GM23248 (cell line): ENCODE measurements at regions of chr17 and their contacts with region 1.

Region 1: DNA sequence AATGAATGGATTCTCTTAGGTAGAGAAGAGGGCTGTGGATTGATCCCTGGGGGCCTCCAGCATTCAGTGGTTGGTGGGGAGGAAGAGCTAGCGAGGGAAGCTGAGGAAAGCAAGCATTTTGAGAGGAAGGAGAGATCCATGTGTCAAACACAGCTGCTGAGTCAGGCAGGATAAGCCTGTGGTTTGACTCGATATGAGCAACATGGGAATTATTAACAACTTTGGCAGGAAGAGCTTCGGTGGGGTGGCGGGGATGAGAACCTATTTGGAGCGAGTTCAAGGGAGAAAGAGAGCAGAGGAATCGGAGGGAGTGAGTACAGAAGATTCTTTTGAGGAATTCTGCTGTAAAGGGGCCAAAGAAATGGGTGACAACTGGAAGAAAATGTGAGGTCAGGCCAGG is 59.5 kb upstream of the CDC42EP4 start:
- DNase-seq: peak; percentile 94
- H3K4me3 ChIP-seq: 0 out of 2 replicates have a peak overlapping the region, but pooled peaks have one; percentile 11
- H3K27ac ChIP-seq: no peak overlapping the region
- H3K4me1 ChIP-seq: peaks cover 6% of the 10 kb centered on the region; the same call in 1 of the 2 replicates
- H3K27me3 ChIP-seq: peaks cover 16% of the 10 kb centered on the region

Region 2: GRCh38 chr17:73255671-73256181 is 115.6 kb before region 1 on chr17:
- in situ Hi-C with region 1: loop called (anchors 5 kb)
- DNase-seq: peak; percentile 62
- H3K4me3 ChIP-seq: no peak overlapping the region
- H3K27ac ChIP-seq: no peak overlapping the region
- H3K4me1 ChIP-seq: no peaks in the 10 kb centered on the region
- H3K27me3 ChIP-seq: no peaks in the 10 kb centered on the region

Region 3: DNA sequence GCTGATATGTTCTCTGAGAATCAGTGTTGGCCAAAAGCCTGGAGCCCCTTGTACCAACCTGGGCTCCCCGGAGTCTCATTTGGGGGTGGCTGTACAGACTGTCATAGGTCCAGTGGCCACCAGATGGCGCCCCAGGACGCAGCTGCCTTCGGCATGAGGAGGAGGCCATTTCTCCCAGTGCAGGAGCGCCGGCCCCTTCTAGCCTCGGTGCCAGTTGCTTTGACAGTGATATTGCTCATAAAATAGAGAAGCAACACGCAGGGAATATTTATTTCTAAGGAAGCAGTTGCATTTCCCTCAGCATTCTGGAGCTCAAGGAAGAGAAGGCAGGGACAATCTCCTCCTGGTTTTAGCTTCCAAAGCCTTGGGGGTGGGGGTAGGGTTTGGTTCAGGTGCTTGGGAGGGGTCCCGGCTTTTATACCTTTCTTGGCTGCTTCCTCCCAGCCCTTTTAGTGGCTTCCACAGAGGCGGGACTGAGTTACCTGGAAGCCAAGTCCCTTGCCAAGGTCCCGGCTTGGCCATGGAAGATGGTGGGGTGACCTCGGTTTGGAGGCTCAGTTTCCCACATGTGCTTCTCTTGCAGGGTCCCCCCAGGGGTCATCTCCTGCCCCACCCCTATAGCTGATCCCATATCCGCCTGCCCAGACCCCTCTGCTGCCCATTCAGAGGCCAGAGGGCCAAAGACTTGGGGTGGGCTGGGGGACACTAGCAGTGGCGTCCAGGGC is 58.3 kb after region 1 on chr17:
- in situ Hi-C with region 1: no loop called
- DNase-seq: peak; percentile 91
- H3K4me3 ChIP-seq: no peak overlapping the region
- H3K27ac ChIP-seq: no peak overlapping the region
- H3K4me1 ChIP-seq: no peaks in the 10 kb centered on the region
- H3K27me3 ChIP-seq: 0 out of 2 replicates have a peak, but pooled peaks cover 9% of the 10 kb centered on the region

Region 4: GRCh38 chr17:73566905-73567782 is 195.9 kb after region 1 on chr17:
- in situ Hi-C with region 1: no loop called
- DNase-seq: no peak
- H3K4me3 ChIP-seq: no peak overlapping the region
- H3K27ac ChIP-seq: no peak overlapping the region
- H3K4me1 ChIP-seq: no peaks in the 10 kb centered on the region
- H3K27me3 ChIP-seq: no peaks in the 10 kb centered on the region; the same call in 1 of the 2 replicates